ENCODE measurements at regions of chr22 and their contacts with region 1.

Region 1: DNA sequence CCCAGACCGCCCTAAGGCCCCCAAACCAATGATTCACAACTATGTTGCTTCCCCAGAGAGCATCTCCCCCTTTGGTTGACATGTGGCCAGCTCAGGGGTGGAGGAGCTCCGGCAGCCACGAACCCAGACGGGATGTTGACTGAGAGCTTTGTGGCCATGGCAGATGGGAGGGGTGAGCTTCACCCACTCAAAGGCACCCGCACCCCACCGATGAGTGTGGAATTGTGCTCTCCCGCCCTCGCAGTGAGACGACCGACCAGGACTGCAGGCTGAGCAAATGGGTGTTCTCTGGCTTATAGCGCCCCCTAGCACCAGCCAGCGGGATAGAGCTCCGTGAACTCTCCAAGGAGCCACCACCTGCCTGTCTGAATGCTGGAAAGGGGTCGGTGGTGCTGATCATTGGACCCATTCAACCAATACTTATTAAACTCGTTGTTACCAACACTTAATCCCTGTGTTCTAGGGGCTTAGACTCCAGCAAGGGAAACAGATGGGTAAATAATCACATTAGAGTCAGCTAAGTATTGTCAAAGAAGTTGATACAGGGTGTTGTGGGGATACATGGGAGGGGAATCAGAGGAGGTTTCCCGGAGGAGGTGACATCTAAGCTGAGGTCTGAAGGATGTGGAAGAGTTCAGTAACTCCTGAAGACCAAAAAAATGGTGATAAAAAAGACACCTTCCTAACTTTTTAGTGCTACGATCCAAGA is 4.5 kb upstream of the TIMP3 start:
- DNase-seq: peak; percentile 70
- H3K4me3 ChIP-seq: no peak overlapping the region
- H3K27ac ChIP-seq: no peak overlapping the region
- H3K4me1 ChIP-seq: peaks cover 7 to 20% (median 8%) of the 10 kb centered on the region in 4 donors
- H3K27me3 ChIP-seq: peaks cover 28% of the 10 kb centered on the region
- CTCF ChIP-seq: peak; percentile 83 to 90 (median 87)
- EP300 ChIP-seq: no peak
- POLR2A ChIP-seq: no peak

Region 2: DNA sequence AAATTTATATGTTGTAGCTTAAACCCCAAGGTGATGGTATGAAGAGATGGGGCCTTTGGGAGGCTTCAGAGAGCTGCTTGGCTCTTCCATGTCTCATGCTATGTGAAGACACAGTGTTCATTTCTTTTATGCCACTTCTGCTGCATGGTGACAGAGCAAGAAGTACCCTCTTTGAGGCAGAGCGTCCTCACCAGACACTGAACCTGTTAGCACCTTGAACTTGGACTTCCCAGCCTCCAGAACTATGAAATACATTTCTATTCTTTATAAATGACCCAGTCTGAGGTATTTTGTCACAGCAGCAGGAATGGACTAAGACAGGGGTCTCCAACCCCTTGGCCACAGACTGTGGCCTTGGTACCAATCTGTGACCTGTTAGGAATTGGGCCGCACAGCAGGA is 142.0 kb before region 1 on chr22:
- in situ Hi-C with region 1: loop called in 3 of 4 experiments (anchors 5 to 10 kb)
- intact Hi-C with region 1: loop called (anchors 2 kb)
- DNase-seq: no peak
- H3K4me3 ChIP-seq: no peak overlapping the region
- H3K27ac ChIP-seq: no peak overlapping the region
- H3K4me1 ChIP-seq: no peaks in the 10 kb centered on the region
- H3K27me3 ChIP-seq: no peaks in the 10 kb centered on the region
- CTCF ChIP-seq: no peak
- EP300 ChIP-seq: no peak
- POLR2A ChIP-seq: no peak

Region 3: GRCh38 chr22:32660292-32660691 is 136.7 kb before region 1 on chr22:
- in situ Hi-C with region 1: loop called in 3 of 4 experiments (anchors 5 to 10 kb)
- intact Hi-C with region 1: loop called (anchors 2 kb)
- DNase-seq: peak; percentile 69
- H3K4me3 ChIP-seq: no peak overlapping the region
- H3K27ac ChIP-seq: no peak overlapping the region
- H3K4me1 ChIP-seq: no peaks in the 10 kb centered on the region
- H3K27me3 ChIP-seq: no peaks in the 10 kb centered on the region
- CTCF ChIP-seq: peak; percentile 68 to 74 (median 72)
- EP300 ChIP-seq: no peak
- POLR2A ChIP-seq: no peak

Region 4: DNA sequence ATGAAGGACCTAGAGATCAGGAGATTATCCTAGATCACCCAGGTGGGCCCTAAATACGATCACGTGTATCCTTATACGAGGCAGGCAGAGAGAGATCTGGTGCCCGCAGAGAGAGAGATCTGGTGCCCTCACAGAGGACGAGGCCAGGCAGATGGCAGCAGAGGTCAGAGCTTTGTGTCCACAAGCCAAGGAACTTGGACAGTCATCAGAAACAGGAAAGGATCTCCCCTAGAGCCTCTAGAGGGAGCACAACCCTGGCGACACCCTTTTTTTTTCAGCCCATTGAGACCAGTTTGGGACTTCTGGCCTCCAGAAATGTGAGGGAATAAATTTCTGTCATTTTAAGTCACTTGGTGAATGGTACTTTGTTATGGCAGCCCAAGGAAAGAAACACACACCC is 21.1 kb before region 1 on chr22:
- in situ Hi-C with region 1: no loop called
- intact Hi-C with region 1: no loop called
- DNase-seq: no peak
- H3K4me3 ChIP-seq: no peak overlapping the region
- H3K27ac ChIP-seq: no peak overlapping the region
- H3K4me1 ChIP-seq: peaks cover 0 to 6% (median 1%) of the 10 kb centered on the region in 4 donors
- H3K27me3 ChIP-seq: no peaks in the 10 kb centered on the region
- CTCF ChIP-seq: peak in 1 of 5 experiments; percentile 23
- EP300 ChIP-seq: no peak
- POLR2A ChIP-seq: no peak

Region 5: GRCh38 chr22:32854351-32854804 is 57.4 kb after region 1 on chr22:
- in situ Hi-C with region 1: no loop called
- intact Hi-C with region 1: no loop called
- DNase-seq: no peak
- H3K4me3 ChIP-seq: no peak overlapping the region
- H3K27ac ChIP-seq: no peak overlapping the region
- H3K4me1 ChIP-seq: peaks cover 20 to 31% (median 23%) of the 10 kb centered on the region in 4 donors
- H3K27me3 ChIP-seq: no peaks in the 10 kb centered on the region
- CTCF ChIP-seq: no peak
- EP300 ChIP-seq: no peak
- POLR2A ChIP-seq: no peak

Region 6: DNA sequence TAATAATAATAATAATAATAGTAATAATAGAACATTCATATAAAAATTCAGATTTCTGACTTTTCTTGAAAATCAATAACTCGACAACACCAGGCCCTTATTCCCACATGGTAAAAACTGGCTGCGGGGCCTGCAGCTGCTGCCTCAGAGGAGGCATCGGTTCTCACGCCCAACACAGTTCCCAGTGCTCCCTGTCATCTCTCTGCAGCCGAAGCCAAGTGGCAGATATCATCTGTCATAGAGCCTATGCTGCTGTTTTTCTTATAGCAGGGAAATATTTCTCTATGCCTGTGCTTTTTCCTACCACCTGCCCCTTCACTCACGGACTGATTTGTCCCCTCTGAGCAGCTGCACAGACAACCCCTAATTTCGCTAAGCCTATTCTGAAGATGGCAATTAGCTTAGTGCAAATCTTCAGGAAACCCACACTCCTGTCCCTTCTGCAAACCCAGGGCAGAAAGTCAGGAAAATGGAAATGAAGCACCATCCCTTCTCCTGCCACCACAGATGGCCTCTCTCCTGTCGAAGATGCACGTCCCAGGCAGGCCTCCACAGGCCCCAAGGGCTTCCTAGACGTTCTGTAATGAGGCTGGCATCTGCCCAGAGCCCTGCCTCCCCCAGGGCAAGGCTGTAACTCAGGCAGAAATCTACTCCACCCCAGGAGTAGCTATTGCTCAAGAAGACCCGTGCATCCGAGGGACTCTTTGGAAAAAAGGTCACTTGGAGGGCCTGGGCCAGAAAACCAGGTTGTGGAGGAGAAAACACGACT is 194.5 kb after region 1 on chr22:
- in situ Hi-C with region 1: no loop called
- intact Hi-C with region 1: loop called (anchors 5 kb)
- DNase-seq: no peak
- H3K4me3 ChIP-seq: no peak overlapping the region
- H3K27ac ChIP-seq: no peak overlapping the region
- H3K4me1 ChIP-seq: no peaks in the 10 kb centered on the region
- H3K27me3 ChIP-seq: no peaks in the 10 kb centered on the region
- CTCF ChIP-seq: no peak
- EP300 ChIP-seq: no peak
- POLR2A ChIP-seq: no peak